AG04449 (cell line): ENCODE measurements at regions of chr9 and their contacts with region 1.

Region 1: DNA sequence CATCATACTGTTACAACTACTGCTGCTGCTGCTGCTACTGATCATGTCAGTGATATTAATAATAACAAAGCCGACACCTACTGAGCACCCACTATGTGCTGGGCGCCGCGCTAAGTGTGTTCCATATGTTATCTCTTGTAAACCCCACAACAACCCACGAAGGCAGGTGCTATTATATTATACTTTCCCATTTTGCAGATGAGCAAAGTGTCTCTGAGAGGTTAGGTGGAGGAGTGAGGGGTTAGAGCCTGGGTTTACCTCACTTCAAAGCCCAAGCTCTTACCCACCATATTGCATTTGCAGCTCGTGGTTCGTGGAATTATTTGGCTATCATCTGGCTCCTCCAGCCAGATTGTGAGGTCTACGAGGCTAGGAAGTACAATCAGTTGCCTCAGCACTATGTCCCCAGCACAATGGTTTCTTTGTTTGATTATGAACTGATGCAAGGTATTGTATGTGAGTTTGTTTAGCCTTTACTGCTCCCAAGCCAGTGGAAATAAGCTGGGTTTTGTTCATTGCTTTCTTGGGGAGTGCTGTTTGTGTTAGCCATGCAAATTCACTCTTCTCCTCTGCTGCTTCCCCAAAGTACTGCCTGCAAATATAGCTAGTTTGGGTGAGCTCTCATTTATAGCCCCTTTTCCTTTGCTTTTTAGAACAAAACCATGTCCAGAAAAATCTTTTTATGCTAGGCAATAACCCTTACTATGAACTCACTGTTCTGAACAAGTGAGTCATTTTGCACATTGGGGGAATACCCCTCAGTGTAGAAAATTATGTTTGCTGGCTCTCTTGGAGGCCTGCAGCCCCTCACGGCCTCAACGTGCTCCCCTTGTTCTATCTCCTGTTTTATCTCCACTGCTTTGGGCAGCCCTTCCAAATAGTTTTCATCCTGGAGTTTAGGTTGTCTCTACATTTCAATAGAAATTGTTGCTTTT is 47.9 kb downstream of the ALG2 start:
- DNase-seq: no peak
- H3K4me3 ChIP-seq: no peak overlapping the region
- CTCF ChIP-seq: no peak

Region 2: GRCh38 chr9:99162759-99163364 is 11.0 kb before region 1 on chr9:
- CTCF ChIA-PET with region 1: interaction called, 19 read pairs
- POLR2A ChIA-PET with region 1: no interaction called
- DNase-seq: no peak
- H3K4me3 ChIP-seq: no peak overlapping the region
- CTCF ChIP-seq: peak; percentile 44